PC-3 (cell line): ENCODE measurements at regions of chr17 and their contacts with region 1.

Region 1: GRCh38 chr17:37570527-37571093 is 38.6 kb downstream of the SYNRG start:
- DNase-seq: peak; percentile 90
- ATAC-seq: peak; percentile 100
- H3K4me3 ChIP-seq: no peak overlapping the region
- H3K27ac ChIP-seq: no peak overlapping the region
- H3K4me1 ChIP-seq: peaks cover 5% of the 10 kb centered on the region; the same call in 1 of the 2 replicates
- H3K27me3 ChIP-seq: no peaks in the 10 kb centered on the region
- CTCF ChIP-seq: peak; percentile 80

Region 2: DNA sequence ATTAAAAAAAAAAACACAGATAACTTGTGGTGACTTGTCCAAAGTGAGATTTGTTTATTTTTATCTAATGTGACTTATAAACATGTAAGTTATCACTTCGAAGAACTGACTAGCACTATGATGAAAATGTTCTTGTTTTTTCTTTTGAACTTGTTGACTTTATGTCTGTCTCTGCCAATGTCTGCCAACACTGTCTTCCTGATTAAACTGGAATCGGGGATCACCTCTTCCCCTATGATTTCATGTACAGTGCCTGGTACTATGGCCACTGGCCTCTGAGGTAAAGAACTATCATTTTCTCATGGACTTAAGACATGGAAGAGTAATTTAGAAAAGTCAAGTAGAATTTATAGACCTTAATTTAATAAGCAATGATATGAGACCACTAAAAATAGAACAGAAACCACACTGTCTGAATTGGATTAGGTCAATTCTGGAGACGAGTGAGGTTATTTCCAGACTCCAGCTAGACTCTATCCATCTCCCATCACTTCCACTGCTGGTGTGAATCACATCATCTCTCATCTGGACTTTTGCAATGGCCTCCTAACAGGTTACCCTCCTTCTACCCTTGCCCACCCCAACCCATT is 186.0 kb before region 1 on chr17:
- CTCF ChIA-PET with region 1: no interaction called
- POLR2A ChIA-PET with region 1: no interaction called
- intact Hi-C with region 1: no loop called
- DNase-seq: no peak
- ATAC-seq: no peak
- H3K4me3 ChIP-seq: no peak overlapping the region
- H3K27ac ChIP-seq: no peak overlapping the region
- H3K4me1 ChIP-seq: no peaks in the 10 kb centered on the region
- H3K27me3 ChIP-seq: no peaks in the 10 kb centered on the region
- CTCF ChIP-seq: no peak

Region 3: GRCh38 chr17:37527249-37527851 is 43.3 kb before region 1 on chr17:
- CTCF ChIA-PET with region 1: interaction called, 13 read pairs
- POLR2A ChIA-PET with region 1: no interaction called
- intact Hi-C with region 1: loop called (anchors 1 kb)
- DNase-seq: peak; percentile 67
- ATAC-seq: peak; percentile 79
- H3K4me3 ChIP-seq: no peak overlapping the region
- H3K27ac ChIP-seq: no peak overlapping the region
- H3K4me1 ChIP-seq: no peaks in the 10 kb centered on the region
- H3K27me3 ChIP-seq: no peaks in the 10 kb centered on the region
- CTCF ChIP-seq: peak; percentile 74